ENCODE measurements at regions of chr6 and their contacts with region 1.

Region 1: GRCh38 chr6:122530440-122531046 is 58.9 kb upstream of the SERINC1 start:
- DNase-seq: peak; percentile 39
- CTCF ChIP-seq: peak; percentile 88

Region 2: GRCh38 chr6:122381497-122382265 is 148.9 kb before region 1 on chr6:
- CTCF ChIA-PET with region 1: interaction called, 112 read pairs
- POLR2A ChIA-PET with region 1: no interaction called
- DNase-seq: peak; percentile 25
- CTCF ChIP-seq: peak; percentile 78

Region 3: DNA sequence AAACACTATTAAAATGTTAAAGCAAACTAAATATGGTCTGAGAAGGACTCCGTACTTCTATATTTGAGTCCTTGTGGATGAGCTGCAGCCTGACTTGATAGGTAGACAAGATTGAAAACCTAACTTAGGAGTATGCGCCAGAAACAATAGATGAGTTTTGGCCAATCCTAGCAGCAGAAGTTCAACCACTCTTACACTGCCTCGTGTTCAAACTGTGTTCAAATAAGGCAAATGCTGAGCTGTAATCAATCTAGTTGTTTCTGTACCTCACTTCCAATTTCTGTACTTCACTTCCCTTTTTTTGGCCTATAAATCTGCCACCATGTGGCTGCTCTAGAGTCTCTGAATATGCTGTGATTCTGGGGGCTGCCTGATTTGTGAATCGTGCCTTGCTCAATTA is 45.8 kb before region 1 on chr6:
- CTCF ChIA-PET with region 1: interaction called, 241 read pairs
- POLR2A ChIA-PET with region 1: no interaction called
- DNase-seq: peak; percentile 19
- CTCF ChIP-seq: peak; percentile 12

Region 4: GRCh38 chr6:122501475-122501874 is 29.1 kb before region 1 on chr6:
- CTCF ChIA-PET with region 1: interaction called, 10 read pairs
- POLR2A ChIA-PET with region 1: no interaction called
- DNase-seq: no peak
- CTCF ChIP-seq: no peak

Region 5: GRCh38 chr6:122520179-122520578 is 10.4 kb before region 1 on chr6:
- CTCF ChIA-PET with region 1: interaction called, 78 read pairs
- POLR2A ChIA-PET with region 1: no interaction called
- DNase-seq: no peak
- CTCF ChIP-seq: no peak

Region 6: GRCh38 chr6:122558080-122558479 is 27.5 kb after region 1 on chr6:
- CTCF ChIA-PET with region 1: interaction called, 13 read pairs
- POLR2A ChIA-PET with region 1: no interaction called
- DNase-seq: no peak
- CTCF ChIP-seq: no peak

Region 7: DNA sequence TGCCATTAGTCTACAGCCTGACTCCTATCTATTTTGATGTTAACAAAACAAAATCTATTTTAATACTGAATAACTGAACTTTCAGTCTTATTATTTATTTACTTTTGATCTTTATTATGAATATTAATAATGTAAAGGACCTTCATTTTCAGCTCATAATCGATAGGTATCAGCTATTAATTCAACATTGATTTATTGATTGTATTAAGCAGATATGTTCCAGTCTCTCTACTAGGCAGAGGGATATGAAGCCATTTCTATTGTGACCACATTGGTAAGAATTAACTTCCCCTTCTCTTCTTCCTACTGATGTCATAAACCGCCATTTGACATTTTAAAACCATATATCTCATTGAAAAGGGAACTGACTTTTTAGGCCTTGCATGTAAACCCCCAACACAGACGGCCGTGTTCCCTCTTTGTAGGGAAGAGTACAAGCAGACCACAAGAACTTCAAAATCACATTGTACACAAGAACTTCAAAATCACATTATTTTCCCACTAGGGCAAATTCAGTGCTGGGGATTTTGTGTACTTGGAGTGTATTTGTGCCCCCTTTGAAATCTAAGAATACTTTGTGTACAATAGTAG is 179.5 kb after region 1 on chr6:
- CTCF ChIA-PET with region 1: no interaction called
- POLR2A ChIA-PET with region 1: no interaction called
- DNase-seq: peak; percentile 5
- CTCF ChIP-seq: no peak

Region 8: DNA sequence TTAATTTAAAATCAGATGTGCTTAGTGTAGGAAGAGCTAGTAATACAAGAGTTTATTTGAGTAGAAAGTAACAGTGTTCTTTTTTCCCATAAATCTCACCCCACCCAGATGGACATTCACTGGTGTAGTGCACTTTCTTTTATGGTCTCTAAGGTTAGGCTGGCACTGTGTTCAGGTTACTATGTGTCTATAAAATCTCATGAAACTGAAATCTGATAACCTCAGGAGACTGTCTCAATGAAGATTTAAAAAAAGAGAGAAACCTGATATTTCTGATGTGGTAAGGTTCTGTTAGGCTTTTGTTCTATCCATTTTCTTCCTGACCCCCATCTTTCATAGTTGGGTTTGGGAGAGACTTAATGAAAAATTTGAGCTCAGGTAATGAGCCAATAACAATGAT is 364.2 kb after region 1 on chr6:
- CTCF ChIA-PET with region 1: no interaction called
- POLR2A ChIA-PET with region 1: no interaction called
- DNase-seq: no peak
- CTCF ChIP-seq: no peak

Measured in GM10248 (cell line).